HEK293 (cell line): ENCODE measurements at regions of chr19 and their contacts with region 1.

Region 1: GRCh38 chr19:8444645-8445487 is at the start of gene HNRNPM:
- H3K4me3 ChIP-seq: peak within 1 kb of the TSS; percentile 95
- H3K27ac ChIP-seq: peak within 1 kb of the TSS; percentile 88
- H3K4me1 ChIP-seq: peaks cover 12% of the 10 kb centered on the region
- CTCF ChIP-seq: no peak

Region 2: DNA sequence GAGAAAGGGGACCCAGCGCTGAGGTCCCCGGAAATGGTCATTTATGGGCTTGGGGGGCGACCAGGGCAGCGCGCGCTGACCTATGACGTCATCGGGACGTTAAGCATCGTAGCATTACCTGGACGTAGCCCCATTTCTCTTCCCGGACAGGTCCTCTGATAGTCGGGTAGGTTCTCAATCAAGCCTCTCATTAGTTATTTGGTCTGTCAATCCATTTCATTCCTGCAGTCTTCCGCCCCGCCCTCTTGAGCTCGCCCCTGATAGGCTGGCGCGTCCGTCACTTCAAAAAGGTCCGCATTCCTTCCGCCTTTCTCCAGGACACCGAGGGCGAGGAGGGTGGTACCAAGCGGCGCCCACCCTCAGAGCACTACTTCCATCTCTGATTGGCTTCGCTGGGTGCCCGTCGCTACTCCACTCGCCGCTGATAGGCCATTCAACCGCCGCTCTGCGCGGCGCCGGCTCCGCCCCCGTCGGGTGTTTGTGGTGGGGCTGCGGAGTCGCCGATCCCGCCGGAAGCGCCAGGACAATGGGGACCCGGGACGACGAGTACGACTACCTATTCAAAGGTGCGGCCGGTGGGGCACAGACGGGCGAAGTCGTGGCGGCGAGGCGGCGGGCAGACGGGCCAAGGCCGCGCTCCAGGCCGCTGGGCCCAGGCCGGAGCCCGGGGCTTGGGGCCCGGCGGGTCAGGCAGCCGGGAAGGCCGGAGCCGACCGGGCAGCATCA is 54.8 kb before region 1 on chr19 and contains the start of gene RAB11B:
- CTCF ChIA-PET with region 1: no interaction called
- POLR2A ChIA-PET with region 1: interaction called, 10 read pairs
- H3K4me3 ChIP-seq: peak within 1 kb of the TSS; percentile 97
- H3K27ac ChIP-seq: peak within 1 kb of the TSS; percentile 98
- H3K4me1 ChIP-seq: peaks cover 3% of the 10 kb centered on the region; the same call in 1 of the 2 replicates
- CTCF ChIP-seq: no peak

Region 3: DNA sequence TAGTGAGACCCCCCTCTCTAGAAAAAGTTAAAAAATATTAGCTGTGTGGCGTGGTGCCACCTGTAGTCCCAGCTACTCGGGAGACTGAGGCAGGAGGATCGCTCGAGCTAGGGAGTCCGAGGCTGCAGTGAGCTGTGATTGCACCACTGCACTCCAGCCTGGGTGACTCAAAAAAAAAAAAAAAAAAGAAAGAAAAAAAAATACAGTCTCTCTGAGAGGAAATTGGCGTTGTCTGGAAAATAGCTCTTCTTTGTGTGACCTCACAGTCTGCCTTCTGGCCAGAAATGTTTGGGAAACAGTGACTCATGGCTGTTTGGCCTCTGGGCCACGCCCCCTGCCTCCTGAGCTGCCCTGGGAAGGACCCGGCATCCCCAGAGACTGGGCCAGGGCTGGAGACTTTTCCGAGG is 21.0 kb before region 1 on chr19:
- CTCF ChIA-PET with region 1: interaction called, 3 read pairs
- POLR2A ChIA-PET with region 1: interaction called, 16 read pairs
- H3K4me3 ChIP-seq: no peak overlapping the region
- H3K27ac ChIP-seq: no peak overlapping the region
- H3K4me1 ChIP-seq: peaks cover 4% of the 10 kb centered on the region
- CTCF ChIP-seq: no peak

Region 4: GRCh38 chr19:8473648-8474476 is 29.0 kb after region 1 on chr19:
- CTCF ChIA-PET with region 1: no interaction called
- POLR2A ChIA-PET with region 1: no interaction called
- H3K4me3 ChIP-seq: no peak overlapping the region
- H3K27ac ChIP-seq: peak overlapping the region; percentile 31; the same call in 1 of the 2 replicates
- H3K4me1 ChIP-seq: no peaks in the 10 kb centered on the region
- CTCF ChIP-seq: no peak

Region 5: DNA sequence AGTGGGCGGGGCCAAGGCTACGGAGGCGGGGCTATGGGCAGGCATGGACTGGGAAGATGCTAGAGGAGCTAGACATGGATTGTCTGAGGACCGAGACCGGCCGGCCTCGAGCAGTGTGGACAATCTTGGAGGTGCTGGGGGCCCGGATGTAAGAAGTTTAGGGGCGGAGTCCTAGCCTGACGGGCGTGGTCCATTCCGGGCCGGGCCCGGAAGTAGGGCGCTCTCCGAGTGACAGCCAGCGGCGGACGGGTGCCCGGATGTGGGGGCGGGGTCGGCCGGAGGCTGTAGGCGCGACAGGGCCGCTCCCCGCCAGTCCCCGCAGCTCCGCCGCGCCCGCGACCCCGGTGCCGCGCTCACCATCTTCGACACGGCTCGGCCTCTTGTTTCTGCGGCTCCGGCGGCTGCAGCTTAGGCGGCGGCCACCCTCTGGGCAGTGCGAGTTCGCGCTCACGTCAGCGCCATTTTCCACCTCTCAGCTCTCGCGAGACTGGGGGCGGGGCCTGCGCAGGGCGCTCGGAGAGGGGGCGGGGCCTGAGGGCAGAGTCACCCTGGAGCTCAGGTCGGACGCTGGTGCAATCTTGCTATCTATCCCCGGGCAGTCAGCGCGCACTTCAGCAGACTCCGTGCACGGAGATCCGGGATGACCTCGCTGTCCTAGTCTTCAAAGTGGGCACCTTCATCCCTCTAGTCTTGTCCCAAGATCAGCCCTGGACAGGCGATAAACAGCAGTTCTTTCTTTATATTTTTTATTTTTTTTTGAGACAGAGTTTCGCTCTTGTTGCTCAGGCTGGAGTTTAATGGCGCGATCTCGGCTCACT is 69.0 kb after region 1 on chr19 and contains the start of gene ZNF414:
- CTCF ChIA-PET with region 1: no interaction called
- POLR2A ChIA-PET with region 1: interaction called, 11 read pairs
- H3K4me3 ChIP-seq: peak within 1 kb of the TSS; percentile 99
- H3K27ac ChIP-seq: peak within 1 kb of the TSS; percentile 87
- H3K4me1 ChIP-seq: peaks cover 7% of the 10 kb centered on the region; the same call in 1 of the 2 replicates
- CTCF ChIP-seq: no peak